ENCODE measurements at regions of chr18 and their contacts with region 1.

Region 1: DNA sequence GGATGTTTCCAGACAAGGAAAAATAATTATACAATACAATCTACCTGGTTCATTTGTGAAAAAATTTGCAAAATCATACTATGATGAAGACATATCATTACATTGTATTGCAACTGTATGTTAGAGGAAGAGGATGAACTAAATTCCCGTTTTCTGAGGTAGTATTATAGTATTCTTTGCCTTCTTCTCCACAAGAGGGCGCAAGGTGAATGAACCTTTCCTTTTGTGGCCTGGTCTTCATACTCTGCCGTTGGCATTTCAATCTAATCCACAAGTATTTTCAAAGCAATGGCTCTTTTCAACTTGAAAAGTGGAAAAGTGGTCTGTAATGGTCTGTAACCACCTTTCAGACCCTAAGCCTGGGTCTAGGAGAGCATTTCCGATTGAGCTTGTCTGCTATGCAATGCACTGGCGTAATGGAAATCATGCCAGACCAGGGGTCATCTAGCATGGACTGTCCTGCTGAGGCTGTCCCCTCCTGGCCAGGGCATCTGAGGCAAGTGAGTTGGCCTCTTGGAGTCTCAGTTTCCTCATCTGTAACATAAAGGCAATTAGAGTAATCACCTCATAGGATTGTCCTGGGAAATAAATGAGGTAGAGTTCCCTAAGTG is 30.8 kb upstream of the ZNF396 start:
- DNase-seq: no peak
- ATAC-seq: peak; percentile 29
- H3K4me3 Mint-ChIP-seq: no peak overlapping the region
- H3K27ac Mint-ChIP-seq: no peak overlapping the region
- H3K4me1 Mint-ChIP-seq: peaks cover 44% of the 10 kb centered on the region
- H3K27me3 Mint-ChIP-seq: no peaks in the 10 kb centered on the region
- CTCF ChIP-seq: peak; percentile 67

Region 2: DNA sequence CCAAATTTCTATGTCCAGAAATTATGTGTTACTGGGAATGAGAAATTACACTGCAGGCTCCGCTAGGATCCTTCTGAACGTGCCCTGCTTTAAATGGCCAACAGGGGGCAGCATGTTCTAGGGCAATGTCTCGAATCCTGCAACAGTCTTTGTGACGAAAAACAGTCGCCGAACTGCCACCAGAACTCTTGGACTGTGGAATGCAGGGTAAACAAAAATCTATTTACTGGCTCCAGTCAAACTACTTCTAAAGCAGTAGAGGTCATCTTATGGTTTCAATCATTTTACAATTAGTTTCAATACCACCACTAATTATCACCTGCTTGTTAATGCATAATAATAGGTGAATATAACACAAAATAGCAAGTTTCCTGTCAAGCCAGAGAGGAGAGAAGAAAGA is 176.9 kb before region 1 on chr18:
- CTCF ChIA-PET with region 1: interaction called, 4 read pairs
- POLR2A ChIA-PET with region 1: no interaction called
- intact Hi-C with region 1: loop called (anchors 1 kb)
- DNase-seq: peak; percentile 49
- ATAC-seq: peak; percentile 97
- H3K4me3 Mint-ChIP-seq: peak overlapping the region; percentile 36
- H3K27ac Mint-ChIP-seq: no peak overlapping the region
- H3K4me1 Mint-ChIP-seq: peaks cover 3% of the 10 kb centered on the region
- H3K27me3 Mint-ChIP-seq: no peaks in the 10 kb centered on the region
- CTCF ChIP-seq: peak; percentile 75

Region 3: DNA sequence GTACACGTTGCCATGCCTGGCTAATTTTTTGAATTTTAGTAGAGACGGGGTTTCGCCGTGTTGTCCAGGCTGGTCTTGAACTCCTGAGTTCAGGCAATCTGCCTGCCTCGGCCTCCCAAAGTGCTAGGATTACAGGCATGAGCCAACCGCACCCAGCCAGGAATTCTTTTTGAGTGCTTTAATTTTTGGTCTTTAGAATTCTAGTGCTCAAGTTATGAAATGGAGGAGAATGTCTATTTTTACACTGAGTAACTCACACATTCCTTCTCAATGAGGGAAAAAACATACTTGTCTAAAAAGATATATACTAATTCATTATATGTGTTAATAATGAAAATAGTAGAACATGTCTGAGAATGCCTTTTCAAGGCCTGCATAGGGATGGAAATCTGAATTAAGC is 39.4 kb before region 1 on chr18:
- CTCF ChIA-PET with region 1: no interaction called
- POLR2A ChIA-PET with region 1: no interaction called
- intact Hi-C with region 1: no loop called
- DNase-seq: no peak
- ATAC-seq: no peak
- H3K4me3 Mint-ChIP-seq: no peak overlapping the region
- H3K27ac Mint-ChIP-seq: no peak overlapping the region
- H3K4me1 Mint-ChIP-seq: no peaks in the 10 kb centered on the region
- H3K27me3 Mint-ChIP-seq: no peaks in the 10 kb centered on the region
- CTCF ChIP-seq: no peak

Region 4: DNA sequence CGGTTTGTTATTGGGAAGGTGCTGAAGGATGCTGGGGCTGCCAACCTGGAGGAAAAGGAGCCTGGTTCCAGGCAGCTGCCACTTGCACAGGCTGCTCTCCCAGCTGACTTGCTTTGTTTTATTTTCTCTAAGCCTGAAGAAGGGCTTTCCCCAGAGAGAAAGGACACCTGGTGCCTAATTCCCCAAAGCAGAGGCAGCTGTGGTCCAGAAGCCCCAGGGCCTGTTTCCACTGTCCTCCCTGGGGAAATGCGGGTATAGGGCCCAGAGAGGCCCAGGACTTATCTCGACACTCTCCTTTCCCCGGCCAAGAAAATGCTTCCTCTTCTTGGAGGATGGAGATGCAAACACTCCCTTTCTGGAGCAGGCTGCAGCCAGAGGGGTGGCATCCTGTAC is 59.6 kb after region 1 on chr18:
- CTCF ChIA-PET with region 1: no interaction called
- POLR2A ChIA-PET with region 1: no interaction called
- intact Hi-C with region 1: loop called (anchors 1 kb)
- DNase-seq: peak; percentile 25
- ATAC-seq: peak; percentile 89
- H3K4me3 Mint-ChIP-seq: peak overlapping the region; percentile 28
- H3K27ac Mint-ChIP-seq: peak overlapping the region; percentile 31
- H3K4me1 Mint-ChIP-seq: peaks cover 32% of the 10 kb centered on the region
- H3K27me3 Mint-ChIP-seq: no peaks in the 10 kb centered on the region
- CTCF ChIP-seq: no peak

Region 5: DNA sequence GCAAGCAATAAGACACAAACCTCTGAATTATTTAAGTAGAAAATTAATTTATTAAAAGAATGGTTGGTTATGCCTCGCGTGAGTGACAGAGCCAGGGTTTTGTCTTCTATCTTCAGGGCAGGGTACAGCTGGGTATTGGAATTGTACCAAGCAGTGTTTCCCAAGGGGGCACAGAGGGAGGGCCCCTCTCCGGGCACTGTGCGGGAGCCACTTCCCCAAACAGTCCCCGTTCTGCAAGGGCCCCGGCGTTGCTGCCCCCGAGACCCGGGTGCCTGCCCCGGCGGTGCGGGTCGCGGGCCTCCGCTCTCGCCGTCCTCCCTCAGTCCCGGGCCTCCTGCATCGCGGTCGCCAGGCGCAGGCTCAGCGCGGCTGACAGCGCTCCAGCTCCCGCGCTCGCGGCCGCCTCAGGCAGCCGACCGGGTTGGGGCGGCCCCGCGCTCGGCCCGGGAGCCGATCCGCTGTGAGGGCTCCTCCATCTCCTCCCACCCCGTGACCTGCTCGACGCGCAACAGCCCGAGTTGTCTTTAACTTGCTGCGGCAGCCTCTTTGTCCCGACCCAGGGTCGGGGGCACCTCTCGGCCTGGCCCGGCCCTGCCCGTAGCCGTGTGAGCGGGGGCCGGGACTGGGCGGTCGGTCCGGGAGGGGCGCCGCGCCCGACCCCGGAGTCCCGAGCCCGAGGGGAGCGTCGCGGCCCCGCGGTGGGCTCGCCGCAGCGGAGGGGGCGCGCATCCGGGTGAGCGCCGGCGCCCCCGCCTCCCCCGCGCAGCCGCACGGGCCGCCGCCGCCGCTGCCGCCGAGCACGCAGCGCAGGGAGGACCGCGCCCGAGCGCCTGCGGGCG is 172.9 kb after region 1 on chr18:
- CTCF ChIA-PET with region 1: interaction called, 8 read pairs
- POLR2A ChIA-PET with region 1: interaction called, 4 read pairs
- intact Hi-C with region 1: loop called (anchors 2 kb)
- DNase-seq: peak; percentile 73
- ATAC-seq: peak; percentile 71
- H3K4me3 Mint-ChIP-seq: peak overlapping the region; percentile 79
- H3K27ac Mint-ChIP-seq: peak overlapping the region; percentile 83
- H3K4me1 Mint-ChIP-seq: peaks cover 42% of the 10 kb centered on the region
- H3K27me3 Mint-ChIP-seq: no peaks in the 10 kb centered on the region
- CTCF ChIP-seq: no peak

Region 6: GRCh38 chr18:35695803-35696202 is 287.8 kb after region 1 on chr18:
- CTCF ChIA-PET with region 1: no interaction called
- POLR2A ChIA-PET with region 1: no interaction called
- intact Hi-C with region 1: loop called (anchors 10 kb)
- DNase-seq: no peak
- ATAC-seq: no peak
- H3K4me3 Mint-ChIP-seq: no peak overlapping the region
- H3K27ac Mint-ChIP-seq: no peak overlapping the region
- H3K4me1 Mint-ChIP-seq: no peaks in the 10 kb centered on the region
- H3K27me3 Mint-ChIP-seq: no peaks in the 10 kb centered on the region
- CTCF ChIP-seq: no peak

Region 7: GRCh38 chr18:35756506-35757117 is 348.6 kb after region 1 on chr18:
- CTCF ChIA-PET with region 1: no interaction called
- POLR2A ChIA-PET with region 1: no interaction called
- intact Hi-C with region 1: loop called (anchors 1 kb)
- DNase-seq: no peak
- ATAC-seq: peak; percentile 75
- H3K4me3 Mint-ChIP-seq: no peak overlapping the region
- H3K27ac Mint-ChIP-seq: no peak overlapping the region
- H3K4me1 Mint-ChIP-seq: no peaks in the 10 kb centered on the region
- H3K27me3 Mint-ChIP-seq: peaks cover 17% of the 10 kb centered on the region
- CTCF ChIP-seq: no peak

Region 8: GRCh38 chr18:35964319-35964718 is 556.3 kb after region 1 on chr18:
- CTCF ChIA-PET with region 1: no interaction called
- POLR2A ChIA-PET with region 1: no interaction called
- intact Hi-C with region 1: no loop called
- DNase-seq: no peak
- ATAC-seq: no peak
- H3K4me3 Mint-ChIP-seq: no peak overlapping the region
- H3K27ac Mint-ChIP-seq: no peak overlapping the region
- H3K4me1 Mint-ChIP-seq: peaks cover 10% of the 10 kb centered on the region
- H3K27me3 Mint-ChIP-seq: no peaks in the 10 kb centered on the region
- CTCF ChIP-seq: no peak

Region 9: GRCh38 chr18:36284671-36285295 is 876.8 kb after region 1 on chr18:
- CTCF ChIA-PET with region 1: interaction called, 3 read pairs
- POLR2A ChIA-PET with region 1: no interaction called
- intact Hi-C with region 1: loop called (anchors 1 kb)
- DNase-seq: no peak
- ATAC-seq: peak; percentile 64
- H3K4me3 Mint-ChIP-seq: no peak overlapping the region
- H3K27ac Mint-ChIP-seq: no peak overlapping the region
- H3K4me1 Mint-ChIP-seq: peaks cover 2% of the 10 kb centered on the region
- H3K27me3 Mint-ChIP-seq: peaks cover 38% of the 10 kb centered on the region
- CTCF ChIP-seq: peak; percentile 72